Adrenal gland (tissue), 19 donors: ENCODE measurements at regions of chr4 and their contacts with region 1.

Region 1: DNA sequence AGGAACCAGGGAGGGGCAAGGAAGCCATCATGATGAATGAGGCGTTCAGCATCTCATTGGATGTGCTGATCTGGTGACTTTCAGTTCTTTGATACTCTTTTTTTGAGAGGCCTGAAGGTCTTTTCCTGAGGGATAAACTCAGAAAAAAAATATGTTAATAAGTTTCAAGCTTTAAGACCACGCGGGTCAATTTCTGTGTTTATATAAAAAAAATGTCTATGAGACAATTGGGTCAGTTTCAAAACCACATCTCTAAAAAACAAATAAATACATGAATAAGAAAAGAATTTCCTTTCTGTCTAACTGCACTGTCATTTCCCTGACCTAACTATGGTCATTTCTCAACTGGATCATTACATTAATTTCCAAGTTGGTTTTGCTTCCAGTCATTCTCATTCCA is 62.6 kb downstream of the TRIML1 start:
- DNase-seq: no peak
- H3K4me3 ChIP-seq: no peak overlapping the region
- H3K27ac ChIP-seq: no peak overlapping the region
- H3K4me1 ChIP-seq: no peaks in the 10 kb centered on the region
- H3K27me3 ChIP-seq: no peaks in the 10 kb centered on the region
- CTCF ChIP-seq: no peak
- POLR2A ChIP-seq: no peak

Region 2: GRCh38 chr4:188439641-188440311 is 237.9 kb after region 1 on chr4:
- intact Hi-C with region 1: loop called in 1 of 2 experiments (anchors 10 kb)
- DNase-seq: peak; percentile 69 to 87 (median 80)
- H3K4me3 ChIP-seq: no peak overlapping the region
- H3K27ac ChIP-seq: no peak overlapping the region
- H3K4me1 ChIP-seq: no peaks in the 10 kb centered on the region
- H3K27me3 ChIP-seq: no peaks in the 10 kb centered on the region
- CTCF ChIP-seq: no peak
- POLR2A ChIP-seq: no peak

Region 3: GRCh38 chr4:188466001-188466400 is 264.1 kb after region 1 on chr4:
- intact Hi-C with region 1: no loop called
- DNase-seq: no peak
- H3K4me3 ChIP-seq: no peak overlapping the region
- H3K27ac ChIP-seq: no peak overlapping the region
- H3K4me1 ChIP-seq: no peaks in the 10 kb centered on the region
- H3K27me3 ChIP-seq: no peaks in the 10 kb centered on the region
- CTCF ChIP-seq: no peak
- POLR2A ChIP-seq: no peak